Endothelial cell of umbilical vein (primary cell): ENCODE measurements at regions of chr2 and their contacts with region 1.

Region 1: GRCh38 chr2:188369365-188369764 is 77.7 kb downstream of the GULP1 start:
- DNase-seq: peak; percentile 70
- H3K4me3 ChIP-seq: no peak overlapping the region
- H3K27ac ChIP-seq: no peak overlapping the region
- H3K4me1 ChIP-seq: no peaks in the 10 kb centered on the region
- H3K27me3 ChIP-seq: no peaks in the 10 kb centered on the region
- CTCF ChIP-seq: peak; percentile 53 to 76
- POLR2A ChIP-seq: no peak

Region 2: GRCh38 chr2:188114014-188114413 is 255.4 kb before region 1 on chr2:
- CTCF ChIA-PET with region 1: interaction called, 4 read pairs
- POLR2A ChIA-PET with region 1: no interaction called
- dilution Hi-C with region 1: no loop called
- intact Hi-C with region 1: loop called (anchors 10 kb)
- DNase-seq: peak; percentile 57
- H3K4me3 ChIP-seq: no peak overlapping the region
- H3K27ac ChIP-seq: no peak overlapping the region
- H3K4me1 ChIP-seq: peaks cover 6% of the 10 kb centered on the region
- H3K27me3 ChIP-seq: no peaks in the 10 kb centered on the region
- CTCF ChIP-seq: no peak
- POLR2A ChIP-seq: no peak

Region 3: DNA sequence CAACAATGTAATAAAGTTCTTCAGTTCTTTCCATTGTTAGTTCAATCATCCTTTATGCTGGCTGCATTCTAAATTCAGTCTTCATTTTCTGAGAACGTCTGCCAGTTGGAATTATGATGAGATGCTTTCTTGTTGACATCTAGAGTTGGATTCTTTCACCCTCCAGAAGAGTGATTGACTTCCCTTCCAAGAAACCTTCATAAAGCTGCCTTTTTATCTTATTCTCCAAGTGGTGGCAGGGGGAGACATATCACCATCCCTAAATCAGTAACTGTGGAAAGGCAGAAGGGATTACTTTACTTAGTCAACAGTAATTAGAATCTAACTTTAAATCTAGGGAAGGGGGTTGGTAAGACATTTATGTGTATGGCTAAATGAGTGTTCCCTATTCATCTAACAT is 164.5 kb before region 1 on chr2:
- CTCF ChIA-PET with region 1: interaction called, 12 read pairs
- POLR2A ChIA-PET with region 1: no interaction called
- dilution Hi-C with region 1: no loop called
- intact Hi-C with region 1: no loop called
- DNase-seq: no peak
- H3K4me3 ChIP-seq: no peak overlapping the region
- H3K27ac ChIP-seq: no peak overlapping the region
- H3K4me1 ChIP-seq: no peaks in the 10 kb centered on the region
- H3K27me3 ChIP-seq: no peaks in the 10 kb centered on the region
- CTCF ChIP-seq: no peak
- POLR2A ChIP-seq: no peak

Region 4: GRCh38 chr2:188333751-188334524 is 35.4 kb before region 1 on chr2:
- CTCF ChIA-PET with region 1: interaction called, 3 read pairs
- POLR2A ChIA-PET with region 1: no interaction called
- dilution Hi-C with region 1: no loop called
- intact Hi-C with region 1: loop called (anchors 2 kb)
- DNase-seq: no peak
- H3K4me3 ChIP-seq: no peak overlapping the region
- H3K27ac ChIP-seq: no peak overlapping the region
- H3K4me1 ChIP-seq: peaks cover 7% of the 10 kb centered on the region
- H3K27me3 ChIP-seq: no peaks in the 10 kb centered on the region
- CTCF ChIP-seq: no peak
- POLR2A ChIP-seq: no peak

Region 5: DNA sequence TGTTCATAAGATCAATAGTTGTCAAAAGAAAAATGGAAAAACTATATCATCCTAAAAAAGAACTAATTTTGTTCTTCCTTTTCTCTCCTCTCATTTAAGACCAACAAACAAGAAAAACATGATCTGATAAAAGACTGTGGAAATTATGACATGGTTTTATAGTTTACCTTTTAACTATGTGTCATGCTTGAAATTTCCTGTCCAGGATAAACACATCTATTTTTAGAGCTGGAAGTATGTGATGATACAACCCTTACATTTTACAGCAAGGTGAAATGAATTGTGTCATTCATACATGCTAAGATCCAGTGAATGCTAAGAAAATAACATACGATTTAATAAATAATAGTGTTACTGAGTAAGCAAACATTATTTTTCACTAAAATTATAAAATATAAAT is 12.2 kb after region 1 on chr2:
- CTCF ChIA-PET with region 1: interaction called, 13 read pairs
- POLR2A ChIA-PET with region 1: no interaction called
- dilution Hi-C with region 1: no loop called
- intact Hi-C with region 1: no loop called
- DNase-seq: peak; percentile 83
- H3K4me3 ChIP-seq: peak overlapping the region in 1 of 3 experiments; percentile 12
- H3K27ac ChIP-seq: peak overlapping the region; percentile 73
- H3K4me1 ChIP-seq: peaks cover 28% of the 10 kb centered on the region
- H3K27me3 ChIP-seq: no peaks in the 10 kb centered on the region
- CTCF ChIP-seq: no peak
- POLR2A ChIP-seq: no peak

Region 6: DNA sequence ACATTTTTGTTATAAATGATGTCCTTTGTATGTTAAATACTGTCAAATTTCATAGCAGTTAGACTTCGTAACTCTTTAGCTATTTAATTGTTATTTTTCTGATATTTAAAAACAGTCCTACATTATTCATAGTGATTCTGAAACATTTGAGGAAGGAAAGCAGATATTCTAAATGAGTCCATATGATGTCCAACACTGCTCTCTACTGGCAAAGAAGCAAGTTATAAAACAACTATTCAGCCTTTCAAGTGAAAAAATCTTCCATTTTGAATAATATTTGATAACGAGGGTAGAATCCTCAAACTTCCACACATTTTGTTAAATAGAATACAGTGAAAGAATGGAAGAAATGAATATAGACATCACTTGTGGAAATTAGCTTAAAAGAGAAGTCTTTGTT is 143.1 kb after region 1 on chr2:
- CTCF ChIA-PET with region 1: interaction called, 4 read pairs
- POLR2A ChIA-PET with region 1: no interaction called
- dilution Hi-C with region 1: no loop called
- intact Hi-C with region 1: loop called (anchors 5 kb)
- DNase-seq: peak; percentile 69
- H3K4me3 ChIP-seq: no peak overlapping the region
- H3K27ac ChIP-seq: no peak overlapping the region
- H3K4me1 ChIP-seq: peaks cover 2% of the 10 kb centered on the region
- H3K27me3 ChIP-seq: no peaks in the 10 kb centered on the region
- CTCF ChIP-seq: peak; percentile 9 to 32
- POLR2A ChIP-seq: no peak